ENCODE measurements at regions of chr1 and their contacts with region 1.

Region 1: DNA sequence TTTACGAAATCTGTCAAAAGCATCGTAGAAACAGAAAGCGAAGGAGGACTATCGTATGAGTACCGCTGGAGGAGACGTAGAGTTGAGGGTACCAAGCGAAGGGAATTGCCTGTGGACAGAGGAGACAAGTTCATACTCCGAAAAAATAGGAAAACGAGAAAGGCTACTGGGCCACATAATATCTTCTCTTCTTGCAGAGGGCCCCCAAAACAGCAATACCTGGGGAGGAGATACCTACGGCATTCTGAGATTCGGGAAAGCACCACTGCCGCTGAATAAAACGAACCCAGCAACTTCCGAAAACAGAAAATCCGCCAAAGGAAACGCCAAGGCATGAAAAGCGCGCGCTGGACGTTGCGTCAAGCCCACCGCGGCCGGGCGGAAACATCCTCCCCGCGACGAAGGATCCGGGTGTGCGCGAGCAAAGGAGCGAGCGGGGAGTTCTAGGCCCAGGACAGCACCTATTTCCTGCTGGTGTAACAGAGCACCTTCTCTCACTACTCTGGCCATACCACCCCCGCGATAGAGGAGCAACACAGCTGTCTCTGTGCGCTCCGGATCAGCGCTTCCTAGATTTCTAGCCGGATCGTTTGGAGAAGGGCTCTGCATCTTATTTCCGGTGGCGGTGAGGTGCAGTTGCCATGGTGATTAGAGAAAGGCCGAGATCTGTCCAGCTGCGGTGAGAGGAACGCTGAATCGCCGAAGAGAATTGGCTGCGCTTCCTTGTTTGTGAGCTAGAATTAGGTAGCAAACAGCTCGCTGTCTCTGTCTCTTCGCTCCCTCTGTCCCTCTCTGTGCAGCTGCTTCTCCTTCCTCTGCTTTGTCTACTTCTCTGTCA is at the starts of genes EFCAB7 and ITGB3BP:
- DNase-seq: peak; percentile 89
- H3K4me3 Mint-ChIP-seq: peak within 1 kb of the TSS; percentile 94
- H3K27ac Mint-ChIP-seq: peak within 1 kb of the TSS; percentile 94
- H3K4me1 Mint-ChIP-seq: peaks cover 27% of the 10 kb centered on the region
- H3K27me3 Mint-ChIP-seq: no peaks in the 10 kb centered on the region
- total RNA-seq, gene EFCAB7: 5.6 to 5.8 TPM
- total RNA-seq, gene ITGB3BP: 59.5 to 61.1 TPM

Region 2: GRCh38 chr1:63322114-63322943 is 200.8 kb before region 1 on chr1 and contains the start of gene FOXD3:
- CTCF ChIA-PET with region 1: no interaction called
- POLR2A ChIA-PET with region 1: no interaction called
- intact Hi-C with region 1: loop called (anchors 1 kb)
- DNase-seq: peak; percentile 58
- H3K4me3 Mint-ChIP-seq: peak within 1 kb of the TSS; percentile 74
- H3K27ac Mint-ChIP-seq: peak within 1 kb of the TSS; percentile 53
- H3K4me1 Mint-ChIP-seq: peaks cover 39% of the 10 kb centered on the region
- H3K27me3 Mint-ChIP-seq: peaks cover 75% of the 10 kb centered on the region
- total RNA-seq, gene FOXD3: not detected

Region 3: DNA sequence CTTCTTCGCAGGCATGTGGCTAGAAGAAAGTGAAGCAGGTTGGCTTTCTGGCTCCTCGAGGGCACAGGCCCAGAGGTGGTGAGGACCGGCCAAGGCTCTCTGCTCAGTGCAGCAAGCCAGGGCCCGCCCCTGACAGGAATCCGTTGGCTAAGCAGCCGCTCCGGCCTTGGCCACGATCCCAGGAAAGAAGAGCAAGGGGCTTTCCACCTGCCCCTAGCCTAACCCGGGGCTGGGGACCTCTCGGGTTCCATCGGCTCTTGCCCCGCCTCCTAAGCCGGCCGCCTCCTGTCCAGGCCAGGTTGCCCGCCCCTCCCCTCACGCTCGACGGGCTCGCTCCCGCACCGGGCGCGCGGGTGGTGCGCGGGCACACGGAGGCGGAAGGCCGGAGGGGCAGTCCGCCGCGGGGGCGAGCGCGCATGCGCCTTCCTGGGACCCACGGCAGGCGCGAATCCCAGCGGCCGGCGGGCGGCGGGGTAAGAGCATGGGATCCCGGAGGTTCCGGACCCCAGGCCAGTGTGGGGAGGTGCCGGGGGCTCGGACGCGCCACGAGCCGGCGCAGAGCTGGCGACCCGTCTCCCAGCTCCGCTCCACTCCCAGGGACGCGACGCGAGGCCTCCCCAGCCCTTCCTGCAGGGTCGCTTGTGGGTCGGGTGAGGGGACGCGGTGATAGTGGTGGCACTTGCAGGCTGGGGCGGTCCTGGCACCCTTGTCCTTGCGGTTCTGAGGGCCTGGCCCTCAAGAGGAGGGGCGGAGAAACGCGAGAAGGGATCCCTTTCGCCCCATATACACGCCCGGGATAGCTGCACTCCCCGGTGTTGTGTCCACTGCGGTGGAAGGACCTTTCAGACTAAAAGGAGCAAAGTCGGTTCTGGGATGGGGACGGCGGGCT is 155.7 kb before region 1 on chr1 and contains the start of gene ALG6:
- CTCF ChIA-PET with region 1: no interaction called
- POLR2A ChIA-PET with region 1: interaction called, 3 read pairs
- intact Hi-C with region 1: loop called (anchors 1 kb)
- DNase-seq: peak; percentile 94
- H3K4me3 Mint-ChIP-seq: peak within 1 kb of the TSS; percentile 97
- H3K27ac Mint-ChIP-seq: peak within 1 kb of the TSS; percentile 74
- H3K4me1 Mint-ChIP-seq: peaks cover 21% of the 10 kb centered on the region
- H3K27me3 Mint-ChIP-seq: peaks cover 3% of the 10 kb centered on the region
- total RNA-seq, gene ALG6: 16.0 to 18.8 TPM

Region 4: GRCh38 chr1:63563745-63564144 is 40.6 kb after region 1 on chr1:
- CTCF ChIA-PET with region 1: no interaction called
- POLR2A ChIA-PET with region 1: no interaction called
- intact Hi-C with region 1: no loop called
- DNase-seq: no peak
- H3K4me3 Mint-ChIP-seq: no peak overlapping the region
- H3K27ac Mint-ChIP-seq: no peak overlapping the region
- H3K4me1 Mint-ChIP-seq: no peaks in the 10 kb centered on the region
- H3K27me3 Mint-ChIP-seq: no peaks in the 10 kb centered on the region

Region 5: DNA sequence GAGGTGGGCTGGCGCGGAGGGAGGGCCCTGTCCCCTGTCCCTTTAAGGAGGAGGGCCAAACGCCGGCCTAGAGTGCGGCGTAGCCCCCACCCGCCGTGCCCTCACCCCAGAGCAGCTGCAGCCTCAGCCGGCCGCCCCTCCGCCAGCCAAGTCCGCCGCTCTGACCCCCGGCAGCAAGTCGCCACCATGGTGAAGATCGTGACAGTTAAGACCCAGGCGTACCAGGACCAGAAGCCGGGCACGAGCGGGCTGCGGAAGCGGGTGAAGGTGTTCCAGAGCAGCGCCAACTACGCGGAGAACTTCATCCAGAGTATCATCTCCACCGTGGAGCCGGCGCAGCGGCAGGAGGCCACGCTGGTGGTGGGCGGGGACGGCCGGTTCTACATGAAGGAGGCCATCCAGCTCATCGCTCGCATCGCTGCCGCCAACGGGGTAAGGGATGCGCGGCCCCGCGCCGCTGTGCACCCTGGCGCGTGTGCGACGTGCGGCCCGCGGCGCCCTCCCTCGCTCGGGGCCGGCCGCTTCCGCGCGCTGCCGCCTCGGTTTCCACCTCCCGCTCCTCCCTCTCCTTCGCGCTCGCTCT is 70.3 kb after region 1 on chr1 and contains the start of gene PGM1:
- CTCF ChIA-PET with region 1: interaction called, 3 read pairs
- POLR2A ChIA-PET with region 1: interaction called, 8 read pairs
- intact Hi-C with region 1: loop called (anchors 1 kb)
- DNase-seq: peak; percentile 84
- H3K4me3 Mint-ChIP-seq: peak within 1 kb of the TSS; percentile 95
- H3K27ac Mint-ChIP-seq: peak within 1 kb of the TSS; percentile 98
- H3K4me1 Mint-ChIP-seq: peaks cover 28% of the 10 kb centered on the region
- H3K27me3 Mint-ChIP-seq: no peaks in the 10 kb centered on the region
- total RNA-seq, gene PGM1: 31.9 to 32.4 TPM

Measured in activated CD4-positive, alpha-beta memory T cell treated with anti-CD3 and anti-CD28 coated beads for 36 hours (primary cell).